ENCODE measurements at regions of chr19 and their contacts with region 1.

Region 1: DNA sequence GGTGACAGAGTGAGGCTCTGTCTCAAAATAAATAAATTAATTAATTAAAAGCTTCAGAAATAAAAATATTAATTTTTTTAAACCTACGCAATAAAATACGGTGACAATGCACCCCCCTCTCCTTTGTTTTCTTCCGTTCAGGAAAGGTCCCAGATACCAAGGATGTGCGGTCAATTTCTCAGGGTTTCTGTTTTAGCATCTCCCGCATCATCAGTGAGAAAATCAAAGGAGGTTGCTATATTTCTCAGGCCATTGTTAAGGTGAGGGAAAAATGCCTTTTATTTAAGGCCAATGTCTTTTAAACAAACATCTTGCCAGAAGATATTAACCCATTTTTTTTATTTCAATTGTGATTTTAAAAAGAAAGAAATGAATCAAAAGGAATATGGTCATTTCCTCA is 111.7 kb downstream of the INSR start:
- DNase-seq: no peak
- H3K4me3 ChIP-seq: no peak overlapping the region
- H3K27ac ChIP-seq: no peak overlapping the region
- H3K4me1 ChIP-seq: no peaks in the 10 kb centered on the region
- H3K27me3 ChIP-seq: no peaks in the 10 kb centered on the region
- CTCF ChIP-seq: no peak

Region 2: DNA sequence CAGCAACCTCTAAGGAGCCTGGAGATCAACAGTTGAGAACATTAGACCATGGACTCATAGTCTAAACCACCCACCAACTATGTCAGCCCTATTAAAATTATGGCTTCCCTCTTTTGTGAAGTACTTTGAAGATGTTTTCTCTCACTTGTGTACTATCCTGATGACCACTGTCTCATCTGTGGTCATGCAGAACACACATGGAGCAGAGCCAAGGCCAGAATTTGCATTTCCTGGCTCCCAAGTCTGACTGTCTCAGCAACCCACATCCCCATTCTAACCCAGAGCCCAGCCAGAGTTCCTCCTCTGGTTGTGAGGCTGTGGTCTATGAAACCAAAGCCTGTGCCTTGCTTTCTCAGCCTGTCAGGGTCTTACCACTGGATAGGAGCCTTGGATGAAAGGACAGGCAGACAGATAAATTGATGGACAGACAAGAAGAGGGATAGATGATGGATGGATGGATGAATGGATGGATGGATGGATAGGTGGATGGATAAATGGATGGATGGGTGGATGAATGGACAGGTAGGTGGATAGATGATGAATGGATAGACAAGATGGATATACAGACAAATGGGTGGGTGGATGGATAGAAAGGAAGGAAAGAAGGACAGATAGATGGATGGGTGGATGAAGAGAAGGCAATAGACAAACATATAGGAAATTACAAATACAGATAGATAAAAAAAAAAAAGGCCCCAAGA is 77.6 kb before region 1 on chr19:
- CTCF ChIA-PET with region 1: no interaction called
- dilution Hi-C with region 1: loop called (anchors 5 kb)
- in situ Hi-C with region 1: no loop called
- intact Hi-C with region 1: no loop called
- DNase-seq: no peak
- H3K4me3 ChIP-seq: no peak overlapping the region
- H3K27ac ChIP-seq: no peak overlapping the region
- H3K4me1 ChIP-seq: peaks cover under 1% of the 10 kb centered on the region
- H3K27me3 ChIP-seq: no peaks in the 10 kb centered on the region
- CTCF ChIP-seq: no peak

Region 3: GRCh38 chr19:7267792-7268704 is 85.6 kb after region 1 on chr19:
- CTCF ChIA-PET with region 1: no interaction called
- dilution Hi-C with region 1: loop called (anchors 5 kb)
- in situ Hi-C with region 1: no loop called
- intact Hi-C with region 1: no loop called
- DNase-seq: no peak
- H3K4me3 ChIP-seq: no peak overlapping the region
- H3K27ac ChIP-seq: no peak overlapping the region
- H3K4me1 ChIP-seq: no peaks in the 10 kb centered on the region
- H3K27me3 ChIP-seq: no peaks in the 10 kb centered on the region
- CTCF ChIP-seq: no peak